ENCODE measurements at regions of chr16 and their contacts with region 1.

Region 1: DNA sequence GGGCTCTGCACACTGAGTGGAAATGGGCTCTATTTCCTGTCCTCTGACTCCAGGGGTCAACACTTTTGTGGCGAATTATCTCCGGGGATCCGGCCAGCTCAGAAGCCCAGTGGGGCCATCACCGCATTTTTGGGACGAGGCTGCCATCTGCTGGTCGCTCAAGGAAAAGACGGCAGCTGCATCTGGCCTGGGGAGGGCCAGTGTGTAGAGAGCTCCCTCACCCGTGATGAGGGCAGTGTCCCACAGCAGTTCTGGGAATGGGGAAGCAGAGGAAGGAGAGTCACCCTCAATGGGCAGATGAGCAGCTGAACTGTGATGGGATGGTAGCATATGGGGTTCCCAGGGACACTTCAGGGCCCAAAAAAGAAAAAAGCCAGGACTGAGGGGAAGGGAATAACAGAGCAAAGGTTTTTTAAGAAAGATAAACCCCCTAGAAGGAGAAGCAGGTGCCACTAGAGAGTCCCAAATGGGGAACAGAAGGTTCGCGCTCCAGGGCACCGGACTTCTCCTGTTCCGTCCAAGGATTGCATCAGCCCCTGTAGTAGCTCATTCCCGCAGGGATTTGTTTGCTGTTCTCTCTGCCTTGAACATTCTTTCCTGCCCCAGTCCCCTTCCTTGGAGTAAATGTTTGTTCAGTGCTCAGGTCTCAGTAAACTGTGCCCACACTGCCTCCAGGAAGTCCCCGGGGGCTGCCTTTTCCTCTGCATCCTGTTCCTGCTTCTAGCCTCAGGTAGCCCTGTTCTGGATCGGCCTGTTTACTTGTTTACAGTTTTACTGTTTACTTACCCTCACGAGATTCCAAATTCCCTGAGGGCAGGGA is 9.3 kb upstream of the ABCC12 start:
- DNase-seq: peak; percentile 75
- H3K4me3 ChIP-seq: no peak overlapping the region
- H3K27ac ChIP-seq: no peak overlapping the region
- H3K4me1 ChIP-seq: no peaks in the 10 kb centered on the region
- H3K27me3 ChIP-seq: no peaks in the 10 kb centered on the region
- CTCF ChIP-seq: peak; percentile 73

Region 2: DNA sequence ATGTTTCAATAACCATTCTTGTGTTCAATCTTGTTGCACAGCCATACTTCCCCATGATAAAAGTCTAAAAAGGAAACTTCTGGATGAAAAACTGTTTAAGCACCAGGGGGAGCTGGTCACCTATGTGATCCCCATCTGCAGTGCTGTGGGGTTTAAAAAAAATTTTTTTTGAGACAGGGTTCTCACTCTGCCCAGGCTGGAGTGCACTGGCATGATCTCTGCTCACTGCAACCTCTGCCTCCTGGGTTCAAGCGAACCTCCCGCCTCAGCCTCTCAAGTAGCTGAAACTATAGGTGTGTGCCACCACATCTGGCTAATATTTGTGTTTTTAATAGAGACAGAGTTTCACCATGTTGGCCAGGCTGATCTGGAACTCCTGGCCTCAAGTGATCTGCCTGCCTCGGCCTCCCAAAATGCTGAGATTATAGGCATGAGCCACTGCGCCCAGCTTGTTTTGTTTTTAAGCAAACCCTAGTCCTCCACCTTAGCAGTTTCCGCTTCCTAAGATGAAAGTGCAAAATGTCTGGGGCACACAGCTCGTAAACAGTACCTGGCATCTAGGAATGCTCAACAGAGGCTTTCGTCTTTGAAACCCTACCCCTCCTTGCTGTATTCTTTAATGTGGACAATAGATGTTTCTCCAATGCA is 1217.1 kb before region 1 on chr16:
- intact Hi-C with region 1: loop called (anchors 5 kb)
- DNase-seq: no peak
- H3K4me3 ChIP-seq: no peak overlapping the region
- H3K27ac ChIP-seq: no peak overlapping the region
- H3K4me1 ChIP-seq: no peaks in the 10 kb centered on the region
- H3K27me3 ChIP-seq: no peaks in the 10 kb centered on the region
- CTCF ChIP-seq: peak; percentile 32

Region 3: DNA sequence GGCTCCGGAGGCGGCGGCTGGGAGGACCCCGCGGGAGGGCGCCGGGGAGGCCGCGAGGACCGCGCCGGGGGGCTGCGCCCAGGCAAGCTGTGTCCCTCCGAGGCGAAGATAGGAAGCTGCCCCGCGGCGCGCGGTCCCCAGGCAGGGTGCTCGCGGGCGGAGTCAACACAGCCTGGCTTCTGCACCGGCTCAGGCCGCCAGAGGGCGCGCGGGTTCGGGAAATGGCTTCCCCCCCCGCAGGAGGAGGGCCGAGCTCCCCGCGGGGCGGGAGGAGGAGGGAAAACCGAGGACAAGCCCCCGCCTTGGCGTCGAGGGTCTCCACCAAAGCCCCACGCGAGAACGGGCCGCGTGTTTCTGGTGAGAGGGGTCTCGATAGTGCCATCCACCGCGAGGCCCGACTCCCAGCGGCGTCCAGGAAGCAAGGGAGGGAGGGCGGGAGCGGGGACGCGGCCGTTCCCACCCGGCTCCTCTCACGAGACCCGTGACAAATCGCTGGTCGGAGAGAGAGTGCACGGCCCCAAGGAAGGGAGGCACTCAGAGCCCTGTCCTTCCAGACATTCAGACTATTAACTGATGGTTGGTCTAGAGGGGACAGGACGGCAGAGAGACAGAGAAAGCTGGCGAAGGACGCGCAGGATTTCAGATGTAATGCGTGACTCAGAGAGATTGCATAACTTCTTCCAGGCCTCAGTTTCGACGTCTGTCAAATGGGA is 1127.2 kb before region 1 on chr16:
- intact Hi-C with region 1: loop called (anchors 5 kb)
- DNase-seq: peak; percentile 94
- H3K4me3 ChIP-seq: peak overlapping the region; percentile 66
- H3K27ac ChIP-seq: no peak overlapping the region
- H3K4me1 ChIP-seq: peaks cover 4% of the 10 kb centered on the region
- H3K27me3 ChIP-seq: no peaks in the 10 kb centered on the region
- CTCF ChIP-seq: peak; percentile 91

Region 4: DNA sequence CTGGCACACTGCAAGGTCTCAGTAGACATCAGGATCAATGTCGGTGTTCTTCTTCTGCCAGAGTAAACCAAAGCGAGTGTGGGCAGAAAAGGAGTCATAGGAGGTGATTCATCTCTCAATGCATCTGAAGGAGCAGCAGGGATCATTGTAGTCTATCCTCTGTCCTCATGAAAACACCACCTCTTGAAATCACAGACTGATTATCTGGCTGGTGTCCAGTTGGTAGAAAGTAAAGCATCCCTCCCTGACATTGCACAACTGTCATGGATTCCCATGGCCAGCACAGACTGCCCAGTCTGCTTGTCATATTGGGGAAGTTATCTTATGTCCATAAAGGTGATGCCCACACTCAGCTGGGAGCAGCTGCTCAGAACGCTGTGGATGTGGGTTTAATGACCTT is 83.5 kb before region 1 on chr16:
- intact Hi-C with region 1: no loop called
- DNase-seq: no peak
- H3K4me3 ChIP-seq: no peak overlapping the region
- H3K27ac ChIP-seq: no peak overlapping the region
- H3K4me1 ChIP-seq: no peaks in the 10 kb centered on the region
- H3K27me3 ChIP-seq: no peaks in the 10 kb centered on the region
- CTCF ChIP-seq: no peak

Region 5: GRCh38 chr16:48409839-48410611 is 244.9 kb after region 1 on chr16:
- intact Hi-C with region 1: no loop called
- DNase-seq: peak; percentile 72
- H3K4me3 ChIP-seq: no peak overlapping the region
- H3K27ac ChIP-seq: peak overlapping the region; percentile 78
- H3K4me1 ChIP-seq: no peaks in the 10 kb centered on the region
- H3K27me3 ChIP-seq: no peaks in the 10 kb centered on the region
- CTCF ChIP-seq: no peak